Endothelial cell of umbilical vein (primary cell): ENCODE measurements at regions of chr6 and their contacts with region 1.

Region 1: DNA sequence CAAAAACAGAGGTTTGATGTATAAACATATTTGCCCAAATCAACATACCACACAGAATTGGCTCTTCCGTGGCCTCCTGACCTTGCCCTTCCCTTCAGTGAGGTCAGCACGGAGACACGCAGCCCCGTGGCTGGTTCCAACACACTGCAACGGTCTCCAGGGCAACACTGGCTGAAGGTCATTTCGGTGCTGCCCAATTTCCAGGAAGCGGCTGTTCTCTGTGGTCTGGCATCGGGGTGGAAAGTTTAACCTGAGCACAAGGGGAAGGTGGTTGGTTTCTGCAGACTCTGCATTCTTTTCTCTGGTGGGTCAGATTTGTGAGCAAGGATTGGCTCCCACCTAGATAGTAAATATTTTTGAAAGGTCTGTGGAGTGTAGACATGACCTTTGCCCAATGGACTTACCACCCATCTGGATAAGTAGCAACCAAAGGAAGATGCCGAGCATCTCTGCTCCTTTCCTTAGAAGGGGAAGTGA is 177.6 kb upstream of the PHACTR1 start:
- DNase-seq: peak; percentile 89
- H3K4me3 ChIP-seq: no peak overlapping the region
- H3K27ac ChIP-seq: peak overlapping the region; percentile 87
- H3K4me1 ChIP-seq: peaks cover 51% of the 10 kb centered on the region
- H3K27me3 ChIP-seq: no peaks in the 10 kb centered on the region
- CTCF ChIP-seq: no peak
- POLR2A ChIP-seq: peak; percentile 38

Region 2: GRCh38 chr6:11609315-11610071 is 929.4 kb before region 1 on chr6:
- CTCF ChIA-PET with region 1: no interaction called
- POLR2A ChIA-PET with region 1: no interaction called
- dilution Hi-C with region 1: no loop called
- intact Hi-C with region 1: loop called (anchors 1 kb)
- DNase-seq: peak; percentile 99
- H3K4me3 ChIP-seq: peak overlapping the region in 2 of 3 experiments; percentile 30 to 86
- H3K27ac ChIP-seq: peak overlapping the region; percentile 99
- H3K4me1 ChIP-seq: peaks cover 78% of the 10 kb centered on the region
- H3K27me3 ChIP-seq: no peaks in the 10 kb centered on the region
- CTCF ChIP-seq: no peak
- POLR2A ChIP-seq: no peak

Region 3: DNA sequence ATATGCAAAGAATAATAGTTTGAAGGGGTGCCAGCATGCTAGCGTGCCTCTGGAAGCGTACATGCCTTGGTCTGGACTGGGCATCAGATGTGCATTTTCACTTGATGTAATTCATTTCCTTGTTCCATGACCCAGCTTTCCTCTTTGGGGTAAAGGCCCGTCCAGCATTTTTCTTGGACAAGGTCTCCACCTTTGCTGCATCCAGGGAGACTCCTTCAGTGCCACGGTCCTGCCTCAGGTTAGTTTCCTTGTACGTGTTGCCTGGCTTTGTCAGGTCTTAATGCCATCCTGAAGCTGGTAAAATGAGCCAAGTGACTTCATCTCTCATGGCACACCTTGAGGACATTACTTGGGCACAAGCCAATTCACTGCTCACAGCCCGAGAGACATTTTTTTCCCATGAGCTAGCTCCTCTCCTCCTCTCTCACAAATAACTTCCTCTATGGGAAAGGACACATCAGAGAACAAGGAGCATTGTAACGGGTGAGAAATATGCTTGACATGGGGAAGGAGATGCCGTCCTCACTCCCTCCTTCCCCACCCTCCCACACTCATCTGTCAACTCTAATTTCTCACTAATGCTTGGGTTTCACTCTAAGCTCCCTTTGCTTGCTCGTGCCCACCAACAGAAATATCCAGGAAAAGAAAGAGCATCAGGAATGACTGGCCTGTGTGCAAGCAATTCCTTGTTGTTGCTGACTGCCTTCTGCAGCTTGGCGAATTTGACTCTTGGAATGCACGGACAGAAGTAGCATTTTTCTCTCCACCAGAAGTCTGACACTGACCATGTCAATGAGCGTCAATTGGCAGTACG is 224.7 kb before region 1 on chr6:
- CTCF ChIA-PET with region 1: no interaction called
- POLR2A ChIA-PET with region 1: no interaction called
- dilution Hi-C with region 1: no loop called
- intact Hi-C with region 1: loop called (anchors 5 kb)
- DNase-seq: peak; percentile 89
- H3K4me3 ChIP-seq: no peak overlapping the region
- H3K27ac ChIP-seq: peak overlapping the region; percentile 77
- H3K4me1 ChIP-seq: peaks cover 23% of the 10 kb centered on the region
- H3K27me3 ChIP-seq: no peaks in the 10 kb centered on the region
- CTCF ChIP-seq: no peak
- POLR2A ChIP-seq: no peak

Region 4: DNA sequence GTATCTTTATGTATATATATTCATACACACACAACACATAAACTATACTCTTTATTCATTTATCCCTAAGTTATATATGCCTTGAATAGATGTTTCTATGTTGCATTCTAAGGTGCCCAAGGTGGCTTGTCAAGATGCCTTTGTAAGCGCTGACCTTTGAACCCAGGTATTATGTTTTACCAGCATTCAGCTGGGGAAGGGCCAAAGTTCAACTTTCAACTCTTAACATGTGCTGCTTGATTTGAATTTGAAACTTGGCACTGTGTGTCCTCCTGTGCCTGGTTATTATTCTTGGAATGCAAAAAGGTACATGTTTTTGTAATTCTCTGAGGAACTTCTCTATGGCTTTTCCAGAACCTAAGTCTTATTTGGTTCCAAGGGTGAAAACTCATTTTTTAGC is 102.2 kb before region 1 on chr6:
- CTCF ChIA-PET with region 1: no interaction called
- POLR2A ChIA-PET with region 1: no interaction called
- dilution Hi-C with region 1: no loop called
- intact Hi-C with region 1: loop called (anchors 1 kb)
- DNase-seq: peak; percentile 37
- H3K4me3 ChIP-seq: no peak overlapping the region
- H3K27ac ChIP-seq: no peak overlapping the region
- H3K4me1 ChIP-seq: peaks cover 5% of the 10 kb centered on the region
- H3K27me3 ChIP-seq: no peaks in the 10 kb centered on the region
- CTCF ChIP-seq: no peak
- POLR2A ChIP-seq: no peak

Region 5: DNA sequence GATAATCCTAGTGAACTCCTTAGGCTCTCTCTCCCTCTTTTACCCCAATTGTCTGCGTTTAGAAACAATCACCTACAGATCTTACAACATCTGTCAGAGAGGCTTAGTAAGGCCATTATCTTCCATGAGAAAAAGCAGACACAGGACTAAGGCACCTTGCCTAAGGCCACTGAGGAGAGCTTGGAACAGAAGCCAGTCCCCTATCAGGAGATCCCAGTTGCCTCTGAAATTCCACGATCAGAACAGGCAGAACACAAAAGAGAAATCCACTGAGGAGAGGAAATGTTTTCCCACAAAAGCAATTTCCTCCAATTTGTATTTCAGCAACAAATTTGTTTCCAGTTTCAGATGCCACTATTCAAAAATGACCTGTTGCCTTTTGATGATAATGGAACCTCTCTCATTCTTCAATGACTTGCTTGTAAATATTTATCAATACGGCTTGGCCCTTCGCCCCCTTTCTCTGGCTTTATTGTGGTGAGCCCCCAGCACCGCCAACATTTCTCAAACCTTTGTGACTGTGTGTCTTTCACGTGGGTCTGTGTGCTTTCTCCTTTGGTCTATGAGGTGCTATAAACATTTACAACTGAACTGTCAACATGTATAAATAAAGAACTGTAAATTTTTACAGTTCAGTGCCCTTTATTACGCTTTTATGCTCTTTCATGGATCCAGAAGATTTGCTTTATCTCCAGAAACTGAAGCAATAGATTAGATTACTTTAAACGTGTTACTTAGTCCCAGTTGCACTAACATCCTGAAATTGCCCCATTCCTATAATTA is 10.1 kb before region 1 on chr6:
- CTCF ChIA-PET with region 1: interaction called, 3 read pairs
- POLR2A ChIA-PET with region 1: no interaction called
- dilution Hi-C with region 1: no loop called
- intact Hi-C with region 1: loop called (anchors 1 kb)
- DNase-seq: peak; percentile 89
- H3K4me3 ChIP-seq: no peak overlapping the region
- H3K27ac ChIP-seq: peak overlapping the region; percentile 73
- H3K4me1 ChIP-seq: peaks cover 24% of the 10 kb centered on the region
- H3K27me3 ChIP-seq: no peaks in the 10 kb centered on the region
- CTCF ChIP-seq: no peak
- POLR2A ChIP-seq: peak; percentile 23

Region 6: DNA sequence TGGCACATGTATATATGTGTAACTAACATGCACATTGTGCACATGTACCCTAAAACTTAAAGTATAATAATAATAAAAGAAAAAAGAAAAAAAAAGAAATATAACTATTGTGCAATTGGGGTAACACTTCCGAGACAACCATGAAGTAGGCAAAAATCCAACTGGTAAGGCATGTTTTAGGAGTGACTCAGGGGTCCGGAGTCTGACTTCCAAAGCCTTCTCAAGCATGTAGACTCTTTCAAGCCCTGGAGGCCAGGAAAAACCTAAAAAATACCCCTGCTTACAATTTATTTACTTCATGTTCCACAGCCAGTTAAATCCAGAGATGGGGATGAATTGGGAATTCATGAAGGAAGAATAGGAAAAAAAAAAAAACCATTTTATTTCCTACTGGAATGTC is 16.3 kb after region 1 on chr6:
- CTCF ChIA-PET with region 1: no interaction called
- POLR2A ChIA-PET with region 1: no interaction called
- dilution Hi-C with region 1: no loop called
- intact Hi-C with region 1: no loop called
- DNase-seq: no peak
- H3K4me3 ChIP-seq: no peak overlapping the region
- H3K27ac ChIP-seq: no peak overlapping the region
- H3K4me1 ChIP-seq: no peaks in the 10 kb centered on the region
- H3K27me3 ChIP-seq: no peaks in the 10 kb centered on the region
- CTCF ChIP-seq: no peak
- POLR2A ChIP-seq: no peak

Region 7: GRCh38 chr6:12890171-12890790 is 351.4 kb after region 1 on chr6:
- CTCF ChIA-PET with region 1: no interaction called
- POLR2A ChIA-PET with region 1: no interaction called
- dilution Hi-C with region 1: no loop called
- intact Hi-C with region 1: loop called (anchors 10 kb)
- DNase-seq: peak; percentile 3
- H3K4me3 ChIP-seq: no peak overlapping the region
- H3K27ac ChIP-seq: no peak overlapping the region
- H3K4me1 ChIP-seq: no peaks in the 10 kb centered on the region
- H3K27me3 ChIP-seq: peaks cover 0 to 10% of the 10 kb centered on the region in 2 experiments
- CTCF ChIP-seq: peak; percentile 66 to 70
- POLR2A ChIP-seq: no peak